T-cell (primary cell): ENCODE measurements at regions of chr16 and their contacts with region 1.

Region 1: GRCh38 chr16:30844671-30845449 is 49.0 kb downstream of the BCL7C start:
- DNase-seq: peak; percentile 38 to 94 (median 73)
- ATAC-seq: peak; percentile 86 to 96 (median 92)
- H3K4me3 ChIP-seq: no peak overlapping the region
- H3K4me3 Mint-ChIP-seq: peak overlapping the region; percentile 28 to 44 (median 36)
- H3K27ac ChIP-seq: peak overlapping the region; percentile 16
- H3K27ac Mint-ChIP-seq: peak overlapping the region; percentile 76 to 77
- H3K4me1 ChIP-seq: peaks cover 2 to 9% of the 10 kb centered on the region in 2 experiments
- H3K4me1 Mint-ChIP-seq: peaks cover 7 to 10% (median 9%) of the 10 kb centered on the region in 3 donors
- H3K27me3 ChIP-seq: no peaks in the 10 kb centered on the region
- H3K27me3 Mint-ChIP-seq: no peaks in the 10 kb centered on the region

Region 2: DNA sequence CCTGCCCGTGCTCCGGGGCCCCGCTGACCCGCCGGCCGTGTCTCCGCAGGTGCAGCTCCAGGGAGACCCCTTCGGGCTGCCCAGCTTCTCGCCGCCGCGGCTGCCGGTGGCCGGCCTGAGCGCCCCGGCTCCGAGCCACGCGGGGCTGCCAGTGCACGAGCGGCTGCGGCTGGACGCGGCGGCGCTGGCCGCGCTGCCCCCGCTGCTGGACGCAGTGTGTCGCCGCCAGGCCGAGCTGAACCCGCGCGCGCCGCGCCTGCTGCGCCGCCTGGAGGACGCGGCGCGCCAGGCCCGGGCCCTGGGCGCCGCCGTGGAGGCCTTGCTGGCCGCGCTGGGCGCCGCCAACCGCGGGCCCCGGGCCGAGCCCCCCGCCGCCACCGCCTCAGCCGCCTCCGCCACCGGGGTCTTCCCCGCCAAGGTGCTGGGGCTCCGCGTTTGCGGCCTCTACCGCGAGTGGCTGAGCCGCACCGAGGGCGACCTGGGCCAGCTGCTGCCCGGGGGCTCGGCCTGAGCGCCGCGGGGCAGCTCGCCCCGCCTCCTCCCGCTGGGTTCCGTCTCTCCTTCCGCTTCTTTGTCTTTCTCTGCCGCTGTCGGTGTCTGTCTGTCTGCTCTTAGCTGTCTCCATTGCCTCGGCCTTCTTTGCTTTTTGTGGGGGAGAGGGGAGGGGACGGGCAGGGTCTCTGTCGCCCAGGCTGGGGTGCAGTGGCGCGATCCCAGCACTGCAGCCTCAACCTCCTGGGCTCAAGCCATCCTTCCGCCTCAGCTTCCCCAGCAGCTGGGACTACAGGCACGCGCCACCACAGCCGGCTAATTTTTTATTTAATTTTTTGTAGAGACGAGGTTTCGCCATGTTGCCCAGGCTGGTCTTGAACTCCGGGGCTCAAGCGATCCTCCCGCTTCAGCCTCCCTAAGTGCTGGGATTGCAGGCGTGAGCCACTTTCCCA is 57.4 kb after region 1 on chr16:
- CTCF ChIA-PET with region 1: interaction called, 7 to 33 read pairs
- POLR2A ChIA-PET with region 1: no interaction called
- DNase-seq: peak in 26 of 35 experiments; percentile 28 to 74 (median 44)
- ATAC-seq: peak; percentile 88 to 90 (median 88)
- H3K4me3 ChIP-seq: peak overlapping the region; percentile 55 to 64
- H3K4me3 Mint-ChIP-seq: peak overlapping the region; percentile 87 to 95 (median 95)
- H3K27ac ChIP-seq: peak overlapping the region; percentile 78
- H3K27ac Mint-ChIP-seq: peak overlapping the region; percentile 96 to 98
- H3K4me1 ChIP-seq: peaks cover 18 to 46% of the 10 kb centered on the region in 2 experiments
- H3K4me1 Mint-ChIP-seq: peaks cover 26 to 30% (median 30%) of the 10 kb centered on the region in 3 donors
- H3K27me3 ChIP-seq: no peaks in the 10 kb centered on the region
- H3K27me3 Mint-ChIP-seq: no peaks in the 10 kb centered on the region

Region 3: DNA sequence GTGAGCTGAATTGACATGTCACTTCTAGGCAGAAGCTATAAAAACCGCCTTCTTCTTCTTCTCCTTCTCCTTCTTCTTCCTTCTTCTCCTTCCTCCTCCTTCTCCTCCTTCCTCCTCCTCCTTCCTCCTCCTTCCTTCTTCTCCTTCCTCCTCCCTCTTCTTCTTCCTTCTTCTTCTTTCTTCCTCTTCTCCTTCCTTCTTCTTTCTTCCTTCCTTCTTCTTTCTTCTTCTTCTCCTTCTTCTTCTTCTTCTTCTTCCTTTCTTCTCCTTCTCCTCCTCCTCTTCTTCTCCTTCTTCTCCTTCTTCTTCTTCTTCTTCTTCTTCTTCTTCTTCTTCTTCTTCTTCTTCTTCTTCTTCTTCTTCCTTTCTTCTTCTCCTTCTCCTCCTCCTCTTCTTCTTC is 73.8 kb after region 1 on chr16:
- CTCF ChIA-PET with region 1: interaction called, 5 to 16 read pairs
- POLR2A ChIA-PET with region 1: no interaction called
- DNase-seq: no peak
- ATAC-seq: no peak
- H3K4me3 ChIP-seq: no peak overlapping the region
- H3K4me3 Mint-ChIP-seq: no peak overlapping the region
- H3K27ac ChIP-seq: no peak overlapping the region
- H3K27ac Mint-ChIP-seq: no peak overlapping the region
- H3K4me1 ChIP-seq: peaks cover 0 to 11% of the 10 kb centered on the region in 2 experiments
- H3K4me1 Mint-ChIP-seq: peaks cover 2 to 11% (median 5%) of the 10 kb centered on the region in 3 donors
- H3K27me3 ChIP-seq: no peaks in the 10 kb centered on the region
- H3K27me3 Mint-ChIP-seq: no peaks in the 10 kb centered on the region

Region 4: GRCh38 chr16:30941600-30942425 is 97.0 kb after region 1 on chr16:
- CTCF ChIA-PET with region 1: interaction called, 3 to 21 read pairs
- POLR2A ChIA-PET with region 1: no interaction called
- DNase-seq: peak in 29 of 35 experiments; percentile 29 to 81 (median 49)
- ATAC-seq: peak; percentile 93 to 94 (median 94)
- H3K4me3 ChIP-seq: peak overlapping the region in 1 of 2 donors; percentile 14
- H3K4me3 Mint-ChIP-seq: no peak overlapping the region
- H3K27ac ChIP-seq: peak overlapping the region; percentile 53
- H3K27ac Mint-ChIP-seq: peak overlapping the region; percentile 61 to 79
- H3K4me1 ChIP-seq: peaks cover 0 to 13% of the 10 kb centered on the region in 2 experiments
- H3K4me1 Mint-ChIP-seq: peaks cover 15 to 28% (median 20%) of the 10 kb centered on the region in 3 donors
- H3K27me3 ChIP-seq: no peaks in the 10 kb centered on the region
- H3K27me3 Mint-ChIP-seq: no peaks in the 10 kb centered on the region

Region 5: DNA sequence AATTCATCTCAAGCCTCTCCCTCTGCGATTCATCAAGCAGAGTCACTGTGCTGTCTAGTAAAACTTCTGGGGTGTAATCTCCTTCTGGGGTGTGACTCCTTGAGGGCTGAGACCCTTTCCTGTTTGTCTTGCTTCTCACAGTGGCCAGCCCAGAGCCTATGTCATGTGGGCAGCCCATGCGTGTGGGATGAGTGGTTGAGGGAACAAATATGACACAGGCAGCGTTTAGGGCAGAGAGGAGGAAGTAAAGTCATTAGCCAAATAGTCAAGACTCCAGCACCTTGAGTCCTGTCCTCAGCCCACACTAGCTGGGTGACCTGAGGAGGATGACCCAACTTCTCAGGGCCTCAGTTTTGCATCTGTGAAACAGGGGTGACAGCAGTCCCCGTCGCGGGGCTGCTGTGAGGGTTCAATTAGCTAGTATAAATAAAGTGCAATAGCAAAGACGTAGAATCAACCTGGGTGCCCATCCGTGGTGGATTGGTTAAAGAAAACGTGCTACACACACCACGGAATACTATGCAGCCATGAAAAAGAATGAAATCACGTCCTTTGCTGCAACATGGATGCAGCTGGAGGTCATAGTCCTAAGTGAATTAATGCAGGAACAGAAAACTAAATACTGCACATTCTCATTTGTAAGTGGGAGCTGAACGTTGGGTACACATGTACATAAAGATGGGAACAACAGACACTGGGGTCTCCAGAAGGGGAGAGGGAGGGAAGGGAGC is 505.6 kb after region 1 on chr16:
- CTCF ChIA-PET with region 1: interaction called in 1 of 2 experiments, 11 read pairs
- POLR2A ChIA-PET with region 1: no interaction called
- DNase-seq: peak in 2 of 35 experiments; percentile 10 to 38
- ATAC-seq: no peak
- H3K4me3 ChIP-seq: no peak overlapping the region
- H3K4me3 Mint-ChIP-seq: no peak overlapping the region
- H3K27ac ChIP-seq: no peak overlapping the region
- H3K27ac Mint-ChIP-seq: no peak overlapping the region
- H3K4me1 ChIP-seq: peaks cover 4 to 38% of the 10 kb centered on the region in 2 experiments
- H3K4me1 Mint-ChIP-seq: peaks cover 25 to 33% (median 32%) of the 10 kb centered on the region in 3 donors
- H3K27me3 ChIP-seq: peaks cover 0 to 16% of the 10 kb centered on the region in 2 experiments
- H3K27me3 Mint-ChIP-seq: peaks cover 4 to 13% of the 10 kb centered on the region in 2 donors